ENCODE measurements at regions of chr4 and their contacts with region 1.

Region 1: DNA sequence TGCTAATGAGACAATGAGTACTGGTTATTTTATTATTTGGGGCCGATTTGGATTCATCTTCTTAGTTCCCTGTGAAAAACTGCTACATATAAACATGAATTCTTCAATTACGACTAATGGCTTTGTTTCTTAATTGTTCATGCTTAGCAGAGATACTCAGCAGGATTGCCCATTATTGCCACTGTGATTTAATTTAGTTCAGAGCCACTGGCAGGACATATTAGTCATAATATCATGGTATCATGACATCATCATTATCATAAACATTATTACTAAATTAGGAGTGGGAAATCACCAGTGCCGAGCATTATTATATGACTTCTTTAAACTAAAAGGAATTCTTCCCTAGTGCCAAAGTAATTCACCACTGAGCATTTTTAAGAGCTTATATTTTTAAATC is 201.4 kb downstream of the SPOCK3 start:
- ATAC-seq: peak in 3 of 8 experiments; percentile 68 to 84 (median 80)
- H3K4me3 ChIP-seq: no peak overlapping the region
- H3K27ac ChIP-seq: no peak overlapping the region
- H3K4me1 ChIP-seq: peaks cover 0 to 4% of the 10 kb centered on the region in 2 donors

Region 2: DNA sequence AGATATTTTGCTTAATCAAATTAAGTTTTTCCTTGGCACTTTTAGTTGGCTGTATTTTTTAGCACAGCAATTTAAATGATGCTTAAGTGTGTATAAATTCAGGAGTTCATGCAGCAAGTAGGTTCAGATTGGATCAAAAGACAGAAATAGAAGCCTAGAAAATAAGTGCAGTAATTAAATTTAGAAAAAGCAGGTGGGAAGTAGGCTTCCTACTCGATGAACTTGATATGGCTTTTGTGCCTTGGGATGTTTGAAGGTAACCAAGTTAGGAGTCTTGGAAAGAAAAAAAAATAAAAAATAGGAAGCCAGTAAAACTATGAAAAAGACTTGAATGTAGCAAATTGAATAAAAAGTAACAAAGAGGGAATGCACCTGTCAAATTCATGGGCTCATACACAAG is 170.8 kb before region 1 on chr4:
- in situ Hi-C with region 1: no loop called
- ATAC-seq: no peak
- H3K4me3 ChIP-seq: no peak overlapping the region
- H3K27ac ChIP-seq: no peak overlapping the region
- H3K4me1 ChIP-seq: no peaks in the 10 kb centered on the region

Region 3: GRCh38 chr4:167290678-167291077 is 257.8 kb after region 1 on chr4:
- in situ Hi-C with region 1: loop called in 1 of 9 experiments (anchors 25 kb)
- ATAC-seq: peak in 2 of 8 experiments; percentile 32 to 55
- H3K4me3 ChIP-seq: no peak overlapping the region
- H3K27ac ChIP-seq: no peak overlapping the region
- H3K4me1 ChIP-seq: peaks cover 0 to 5% of the 10 kb centered on the region in 2 donors

Region 4: GRCh38 chr4:167321299-167321698 is 288.4 kb after region 1 on chr4:
- in situ Hi-C with region 1: no loop called
- ATAC-seq: no peak
- H3K4me3 ChIP-seq: no peak overlapping the region
- H3K27ac ChIP-seq: no peak overlapping the region
- H3K4me1 ChIP-seq: no peaks in the 10 kb centered on the region

Measured in motor neuron (in vitro differentiated cells).